ENCODE measurements at regions of chr17 and their contacts with region 1.

Region 1: DNA sequence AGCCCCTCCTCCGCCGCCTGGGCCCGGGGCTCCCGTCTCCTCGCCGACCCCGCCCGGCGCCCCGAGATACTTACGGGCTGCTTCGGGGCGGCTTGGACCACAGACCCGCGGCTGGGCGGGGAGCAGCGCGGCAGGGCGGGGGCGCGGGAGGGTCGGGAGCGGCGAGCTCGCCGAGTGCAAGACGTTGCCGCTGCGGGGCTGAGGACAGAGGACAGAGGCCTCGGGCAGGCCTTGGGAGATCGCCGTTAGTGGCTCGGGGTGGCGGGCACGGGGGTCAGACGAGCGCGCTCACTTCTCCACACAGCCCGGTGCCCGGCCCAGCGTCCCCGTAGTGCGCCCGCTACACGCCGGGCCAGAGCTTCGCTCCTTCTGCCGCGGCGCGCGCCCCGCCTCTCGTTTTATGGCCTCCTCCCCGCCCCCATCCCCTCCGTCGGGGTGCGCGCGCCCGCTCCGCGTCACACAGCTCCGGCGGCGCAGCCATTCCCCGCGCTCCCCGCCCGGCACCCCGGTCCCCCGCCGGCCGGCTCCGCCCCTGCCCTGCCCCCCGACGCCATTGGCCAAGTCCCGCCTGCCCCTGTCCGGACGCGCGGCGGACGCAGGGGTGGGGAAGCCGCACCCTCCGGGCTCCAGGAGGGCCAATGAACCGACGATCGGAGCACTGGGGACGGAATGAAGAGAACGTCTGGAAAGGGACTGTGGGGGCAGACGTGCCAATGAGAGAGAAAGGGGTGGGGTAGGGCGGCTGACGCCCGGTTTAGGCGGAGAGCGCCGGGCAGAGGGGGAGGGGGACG is at the start of gene TOB1:
- DNase-seq: peak; percentile 92 to 96 (median 94)
- ATAC-seq: peak; percentile 89
- H3K4me3 ChIP-seq: peak within 1 kb of the TSS; percentile 88
- H3K27ac ChIP-seq: peak within 1 kb of the TSS; percentile 88
- H3K4me1 ChIP-seq: peaks cover 11 to 13% of the 10 kb centered on the region in 2 experiments; a peak in 4 of 5 replicates
- H3K27me3 ChIP-seq: no peaks in the 10 kb centered on the region
- CTCF ChIP-seq: no peak
- EP300 ChIP-seq: no peak
- POLR2A ChIP-seq: peak; percentile 99
- RAD21 ChIP-seq: no peak; a peak in 1 of 4 replicates
- polyA plus RNA-seq, gene TOB1: 44.9 to 63.7 TPM

Region 2: DNA sequence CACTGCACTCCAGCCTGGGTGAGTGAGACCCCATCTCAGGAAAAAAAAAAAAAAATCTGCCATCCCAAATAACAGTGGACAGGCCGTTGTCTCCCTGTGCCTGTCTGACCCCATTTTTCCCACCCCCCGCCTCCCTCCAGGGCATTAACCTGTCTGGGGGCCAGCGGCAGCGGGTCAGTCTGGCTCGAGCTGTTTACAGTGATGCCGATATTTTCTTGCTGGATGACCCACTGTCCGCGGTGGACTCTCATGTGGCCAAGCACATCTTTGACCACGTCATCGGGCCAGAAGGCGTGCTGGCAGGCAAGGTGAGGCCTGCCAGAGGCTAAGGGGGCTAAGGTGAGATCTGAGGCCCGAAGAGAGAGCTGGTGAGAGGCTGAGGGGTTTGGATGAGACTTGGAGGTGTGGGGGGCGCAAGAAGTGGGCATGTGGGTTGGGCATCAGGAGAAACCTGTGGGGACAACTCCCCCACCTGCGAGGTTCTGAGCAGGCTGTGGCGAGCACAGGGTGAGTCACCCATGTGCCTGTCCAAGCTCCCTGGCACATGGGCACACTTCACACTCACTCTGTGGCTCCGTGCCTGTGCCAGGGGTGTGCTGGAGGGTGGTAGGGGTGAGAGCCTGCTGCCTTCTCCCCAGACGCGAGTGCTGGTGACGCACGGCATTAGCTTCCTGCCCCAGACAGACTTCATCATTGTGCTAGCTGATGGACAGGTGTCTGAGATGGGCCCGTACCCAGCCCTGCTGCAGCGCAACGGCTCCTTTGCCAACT is 193.2 kb before region 1 on chr17:
- CTCF ChIA-PET with region 1: no interaction called
- POLR2A ChIA-PET with region 1: no interaction called
- in situ Hi-C with region 1: no loop called
- intact Hi-C with region 1: no loop called
- DNase-seq: no peak
- ATAC-seq: no peak
- H3K4me3 ChIP-seq: no peak overlapping the region
- H3K27ac ChIP-seq: no peak overlapping the region
- H3K4me1 ChIP-seq: peaks cover 0 to 16% of the 10 kb centered on the region in 2 experiments; a peak in 3 of 5 replicates
- H3K27me3 ChIP-seq: peaks cover 2 to 37% of the 10 kb centered on the region in 2 experiments; a peak in 2 of 5 replicates
- CTCF ChIP-seq: no peak
- EP300 ChIP-seq: no peak
- POLR2A ChIP-seq: no peak
- RAD21 ChIP-seq: no peak

Region 3: GRCh38 chr17:50719144-50719923 is 146.8 kb before region 1 on chr17 and contains the start of gene LUC7L3:
- CTCF ChIA-PET with region 1: no interaction called
- POLR2A ChIA-PET with region 1: no interaction called
- in situ Hi-C with region 1: no loop called
- intact Hi-C with region 1: no loop called
- DNase-seq: peak; percentile 96 to 97 (median 97)
- ATAC-seq: peak; percentile 92
- H3K4me3 ChIP-seq: peak within 1 kb of the TSS; percentile 87
- H3K27ac ChIP-seq: peak within 1 kb of the TSS; percentile 99
- H3K4me1 ChIP-seq: peaks cover 11 to 15% of the 10 kb centered on the region in 2 experiments; a peak in 4 of 5 replicates
- H3K27me3 ChIP-seq: no peaks in the 10 kb centered on the region
- CTCF ChIP-seq: peak in 1 of 3 experiments; percentile 3; a peak in 1 of 6 replicates
- EP300 ChIP-seq: peak; percentile 28; the same call in 1 of the 2 replicates
- POLR2A ChIP-seq: peak; percentile 98
- RAD21 ChIP-seq: no peak
- polyA plus RNA-seq, gene LUC7L3: 80.8 to 97.7 TPM

Region 4: GRCh38 chr17:50841949-50842354 is 24.2 kb before region 1 on chr17:
- CTCF ChIA-PET with region 1: no interaction called
- POLR2A ChIA-PET with region 1: interaction called, 146 read pairs
- in situ Hi-C with region 1: no loop called
- intact Hi-C with region 1: no loop called
- DNase-seq: peak; percentile 77 to 84 (median 83)
- ATAC-seq: peak; percentile 93
- H3K4me3 ChIP-seq: no peak overlapping the region
- H3K27ac ChIP-seq: no peak overlapping the region
- H3K4me1 ChIP-seq: peaks cover 0 to 13% of the 10 kb centered on the region in 2 experiments; a peak in 2 of 5 replicates
- H3K27me3 ChIP-seq: no peaks in the 10 kb centered on the region
- CTCF ChIP-seq: peak; percentile 84 to 90 (median 87)
- EP300 ChIP-seq: no peak
- POLR2A ChIP-seq: no peak
- RAD21 ChIP-seq: peak; percentile 85 to 94

Region 5: GRCh38 chr17:50877838-50878237 is 11.7 kb after region 1 on chr17:
- CTCF ChIA-PET with region 1: no interaction called
- POLR2A ChIA-PET with region 1: interaction called, 48 read pairs
- in situ Hi-C with region 1: no loop called
- intact Hi-C with region 1: no loop called
- DNase-seq: no peak
- ATAC-seq: no peak
- H3K4me3 ChIP-seq: no peak overlapping the region
- H3K27ac ChIP-seq: no peak overlapping the region
- H3K4me1 ChIP-seq: no peaks in the 10 kb centered on the region; a peak in 1 of 5 replicates
- H3K27me3 ChIP-seq: no peaks in the 10 kb centered on the region
- CTCF ChIP-seq: no peak
- EP300 ChIP-seq: no peak
- POLR2A ChIP-seq: no peak
- RAD21 ChIP-seq: no peak

Region 6: GRCh38 chr17:50889528-50890118 is 23.4 kb after region 1 on chr17:
- CTCF ChIA-PET with region 1: no interaction called
- POLR2A ChIA-PET with region 1: interaction called, 48 read pairs
- in situ Hi-C with region 1: no loop called
- intact Hi-C with region 1: no loop called
- DNase-seq: peak in 1 of 4 experiments; percentile 2
- ATAC-seq: no peak
- H3K4me3 ChIP-seq: no peak overlapping the region
- H3K27ac ChIP-seq: no peak overlapping the region
- H3K4me1 ChIP-seq: peaks cover 13 to 18% of the 10 kb centered on the region in 2 experiments; a peak in 4 of 5 replicates
- H3K27me3 ChIP-seq: no peaks in the 10 kb centered on the region
- CTCF ChIP-seq: no peak
- EP300 ChIP-seq: no peak
- POLR2A ChIP-seq: no peak
- RAD21 ChIP-seq: no peak

Region 7: DNA sequence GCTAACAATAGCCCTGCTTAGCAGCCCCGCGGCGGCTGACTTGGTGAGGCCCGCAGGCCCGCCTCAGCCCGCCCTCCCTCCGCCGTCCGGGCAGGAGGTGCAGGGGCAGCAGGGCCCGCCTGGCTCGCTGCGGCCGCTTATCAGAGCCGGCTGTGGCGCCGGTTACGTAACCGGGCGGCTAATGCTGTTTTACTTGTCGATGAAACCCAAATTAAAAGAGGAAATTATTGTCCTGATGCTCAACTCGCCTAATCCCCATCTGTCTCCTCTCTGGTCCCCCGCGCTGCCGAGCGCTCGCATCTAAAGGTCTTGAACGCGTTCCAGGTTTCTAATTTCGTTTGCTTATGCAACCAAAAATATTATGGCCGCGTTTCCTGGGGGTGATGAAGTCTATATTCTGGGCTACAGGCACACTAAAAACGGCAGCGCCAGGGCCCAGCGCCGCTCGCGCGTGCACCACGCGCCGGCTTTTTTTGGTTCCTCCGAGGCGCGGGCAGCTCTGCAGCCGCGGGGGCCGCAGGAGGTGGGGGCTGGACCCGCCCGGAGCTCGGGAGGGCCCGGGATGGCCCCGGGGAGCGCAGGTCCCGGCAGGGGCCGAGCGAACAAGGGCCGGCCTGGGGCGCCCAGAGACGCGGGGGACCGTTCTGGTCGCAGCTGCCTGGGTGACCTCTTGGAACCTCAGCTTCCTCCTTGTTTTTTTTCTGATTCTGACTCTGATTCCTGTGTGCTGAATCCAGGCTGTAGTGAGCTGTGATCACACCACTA is 65.1 kb after region 1 on chr17:
- CTCF ChIA-PET with region 1: no interaction called
- POLR2A ChIA-PET with region 1: interaction called, 25 read pairs
- in situ Hi-C with region 1: no loop called
- intact Hi-C with region 1: no loop called
- DNase-seq: peak; percentile 69 to 78 (median 72)
- ATAC-seq: peak; percentile 79
- H3K4me3 ChIP-seq: peak overlapping the region; percentile 28
- H3K27ac ChIP-seq: peak overlapping the region; percentile 48; the same call in 1 of the 3 replicates
- H3K4me1 ChIP-seq: peaks cover 40 to 48% of the 10 kb centered on the region in 2 experiments
- H3K27me3 ChIP-seq: no peaks in the 10 kb centered on the region
- CTCF ChIP-seq: no peak
- EP300 ChIP-seq: no peak
- POLR2A ChIP-seq: no peak
- RAD21 ChIP-seq: no peak

Region 8: GRCh38 chr17:51153210-51154072 is 287.3 kb after region 1 on chr17 and contains the start of gene NME1:
- CTCF ChIA-PET with region 1: no interaction called
- POLR2A ChIA-PET with region 1: no interaction called
- in situ Hi-C with region 1: loop called (anchors 10 kb)
- intact Hi-C with region 1: no loop called
- DNase-seq: peak; percentile 92 to 99 (median 93)
- ATAC-seq: peak; percentile 95
- H3K4me3 ChIP-seq: peak within 1 kb of the TSS; percentile 71
- H3K27ac ChIP-seq: peak within 1 kb of the TSS; percentile 87
- H3K4me1 ChIP-seq: peaks cover 5 to 15% of the 10 kb centered on the region in 2 experiments; a peak in 4 of 5 replicates
- H3K27me3 ChIP-seq: no peaks in the 10 kb centered on the region
- CTCF ChIP-seq: peak; percentile 89 to 99 (median 96)
- EP300 ChIP-seq: peak; percentile 79
- POLR2A ChIP-seq: peak; percentile 96
- RAD21 ChIP-seq: peak; percentile 95 to 98
- polyA plus RNA-seq, gene NME1: 1,450 to 1,588 TPM

Measured in K562 (cell line).